ENCODE measurements at regions of chr20 and their contacts with region 1.

Region 1: DNA sequence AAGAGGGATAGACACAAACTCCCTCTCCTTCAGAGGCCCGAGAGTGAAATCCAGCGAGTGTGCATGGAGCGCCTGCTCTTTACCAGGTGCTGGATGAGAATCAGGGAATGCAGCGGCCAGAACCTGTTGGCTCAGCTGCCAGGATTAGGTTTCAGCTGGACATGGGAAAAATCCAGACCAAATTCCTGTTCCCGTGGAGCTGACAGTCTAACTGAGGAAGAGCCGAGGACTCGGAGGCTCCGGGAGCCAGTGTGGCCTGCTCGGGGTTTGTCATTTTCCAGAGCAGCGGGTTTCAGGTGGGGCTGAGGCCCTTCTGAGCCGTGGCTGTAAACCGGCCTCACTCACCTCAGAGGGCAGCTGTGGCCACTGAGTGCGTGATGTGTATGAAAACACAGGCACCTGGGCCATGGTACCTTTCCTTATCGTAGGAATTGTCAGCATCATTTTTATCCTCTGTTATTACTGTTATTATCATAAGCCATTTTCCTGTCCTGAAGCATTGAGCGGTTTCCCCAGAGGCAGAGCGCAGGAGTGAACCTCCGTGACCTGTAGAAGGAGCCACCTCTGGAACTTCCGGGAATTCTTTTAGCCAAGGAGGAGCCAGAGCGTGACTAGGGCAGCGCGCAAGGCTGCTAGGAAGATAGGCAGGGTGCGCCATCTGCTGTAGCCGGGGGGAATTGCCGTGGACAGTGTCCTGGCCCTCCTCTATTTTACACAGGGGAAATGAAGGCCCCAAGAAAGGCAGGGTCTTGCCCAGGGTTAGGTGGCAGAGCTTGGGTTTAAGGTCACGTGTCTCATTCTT is 27.3 kb downstream of the PKIG start:
- DNase-seq: peak; percentile 81 to 88
- ATAC-seq: peak; percentile 94
- H3K4me3 ChIP-seq: peak overlapping the region; percentile 35 to 44 (median 41)
- H3K27ac ChIP-seq: peak overlapping the region; percentile 88 to 93 (median 92)
- H3K4me1 ChIP-seq: peaks cover 35 to 43% of the 10 kb centered on the region in 2 donors
- H3K27me3 ChIP-seq: no peaks in the 10 kb centered on the region
- CTCF ChIP-seq: peak; percentile 96 to 99 (median 98)
- POLR2A ChIP-seq: no peak

Region 2: DNA sequence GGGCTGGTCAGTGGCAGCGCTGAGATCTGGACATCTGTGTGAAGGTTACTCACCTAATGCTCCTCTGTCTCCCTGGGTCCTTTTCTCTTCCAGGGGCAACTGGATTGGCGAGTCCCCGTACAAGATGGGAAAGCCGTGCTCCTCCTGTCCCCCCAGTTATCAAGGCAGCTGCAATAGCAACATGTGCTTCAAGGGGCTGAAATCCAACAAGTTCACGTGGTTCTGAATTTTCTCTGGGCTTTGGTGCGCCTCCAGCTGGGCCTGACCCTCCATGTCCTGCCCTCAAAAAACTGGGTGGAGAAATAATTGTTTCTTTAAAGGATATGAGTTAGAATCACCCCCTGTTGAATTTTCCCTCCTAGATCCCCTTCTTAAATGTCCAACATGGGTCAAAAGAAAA is 259.1 kb before region 1 on chr20:
- in situ Hi-C with region 1: no loop called
- intact Hi-C with region 1: no loop called
- DNase-seq: no peak
- ATAC-seq: no peak
- H3K4me3 ChIP-seq: no peak overlapping the region
- H3K27ac ChIP-seq: no peak overlapping the region
- H3K4me1 ChIP-seq: no peaks in the 10 kb centered on the region
- H3K27me3 ChIP-seq: peaks cover 0 to 2% (median 0%) of the 10 kb centered on the region in 3 donors
- CTCF ChIP-seq: no peak
- POLR2A ChIP-seq: no peak

Region 3: DNA sequence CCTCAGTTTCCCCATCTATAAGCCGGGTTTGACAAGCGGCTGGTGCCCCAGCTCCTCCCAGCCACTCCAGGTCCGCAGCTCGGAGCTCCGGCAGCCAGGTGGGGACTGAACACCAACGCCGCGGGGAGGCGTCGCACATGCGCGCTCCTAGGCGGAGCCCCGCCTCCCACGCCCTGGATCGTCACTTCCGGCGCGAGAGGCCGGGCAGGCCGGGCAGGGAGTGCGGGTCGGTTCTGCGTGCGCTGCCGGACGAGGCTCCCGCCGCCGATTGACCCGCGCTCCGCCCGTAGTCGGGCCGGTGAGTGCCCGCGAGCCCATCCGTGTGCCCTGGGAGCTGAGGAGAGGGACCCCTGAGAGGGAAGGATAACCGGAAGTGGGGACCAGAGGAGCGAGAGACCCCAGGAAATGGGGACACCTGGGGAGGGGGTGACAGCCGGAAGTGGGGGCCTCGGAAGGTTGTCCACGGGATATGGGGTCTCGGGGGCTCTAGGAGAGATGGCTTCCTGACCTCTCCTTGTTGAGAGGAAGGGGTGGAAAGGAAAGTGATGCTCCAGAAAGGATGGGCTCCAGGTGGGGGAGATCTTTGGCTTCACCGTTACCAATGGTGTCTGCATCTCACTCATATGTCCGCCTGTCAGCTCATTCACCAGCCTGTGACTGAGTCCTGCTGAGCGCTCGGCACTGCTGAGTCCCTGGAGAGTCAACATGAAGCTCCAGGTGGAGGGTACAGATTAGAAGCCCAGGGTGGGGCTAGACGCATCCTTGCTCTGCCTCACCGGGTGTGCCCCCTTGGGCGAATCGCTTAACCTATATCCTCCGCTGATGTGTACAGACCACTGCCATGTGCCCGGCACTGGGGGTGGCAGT is 133.8 kb before region 1 on chr20 and contains the start of gene TTPAL:
- in situ Hi-C with region 1: loop called in 1 of 4 experiments (anchors 10 kb)
- intact Hi-C with region 1: loop called (anchors 1 kb)
- DNase-seq: peak; percentile 77 to 88
- ATAC-seq: peak; percentile 85 to 87
- H3K4me3 ChIP-seq: peak within 1 kb of the TSS; percentile 66 to 97 (median 78)
- H3K27ac ChIP-seq: peak within 1 kb of the TSS; percentile 88 to 99 (median 92)
- H3K4me1 ChIP-seq: peaks cover 12 to 15% of the 10 kb centered on the region in 2 donors
- H3K27me3 ChIP-seq: no peaks in the 10 kb centered on the region
- CTCF ChIP-seq: peak; percentile 31 to 63 (median 52)
- POLR2A ChIP-seq: peak; percentile 96 to 98
- total RNA-seq, gene TTPAL: 3.5 to 5.0 (median 4.7) TPM

Region 4: DNA sequence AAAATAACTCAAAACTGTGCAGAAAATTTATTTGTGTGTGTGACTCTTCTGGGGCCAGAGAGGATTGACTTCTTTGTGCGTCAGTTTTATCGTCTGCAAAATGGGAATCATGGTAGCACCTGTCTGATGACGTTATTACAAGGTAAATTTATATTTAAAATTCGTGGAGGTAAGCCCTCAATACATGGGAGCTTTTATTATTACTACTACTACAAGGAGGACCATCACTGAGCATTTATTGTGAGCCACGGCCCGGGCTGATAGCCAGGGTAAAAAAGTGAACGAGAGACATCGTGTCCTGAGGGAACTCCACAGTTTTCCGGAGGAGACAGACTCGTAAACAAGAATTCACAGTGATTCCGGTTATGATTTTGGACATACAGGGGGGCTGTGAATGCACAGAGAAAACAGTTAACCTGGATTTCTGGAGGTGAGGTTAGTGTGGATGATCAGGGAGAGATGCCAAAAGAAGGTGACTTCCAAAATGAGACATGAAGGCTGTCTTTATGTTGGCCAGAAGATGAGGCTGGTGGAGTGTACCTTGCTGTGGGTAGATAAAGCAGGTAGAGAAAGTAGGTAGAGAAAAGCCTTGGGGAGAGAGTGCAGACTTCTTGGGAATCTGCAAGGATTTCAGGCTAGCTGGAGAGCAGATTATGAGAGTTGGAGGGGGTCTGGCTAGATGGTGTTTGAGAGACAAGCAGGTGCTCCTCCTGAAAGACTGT is 77.3 kb before region 1 on chr20:
- in situ Hi-C with region 1: loop called (anchors 5 kb)
- intact Hi-C with region 1: loop called (anchors 1 kb)
- DNase-seq: no peak
- ATAC-seq: peak; percentile 28 to 38
- H3K4me3 ChIP-seq: peak overlapping the region; percentile 63 to 82 (median 78)
- H3K27ac ChIP-seq: peak overlapping the region; percentile 74 to 85 (median 77)
- H3K4me1 ChIP-seq: peaks cover 9 to 15% of the 10 kb centered on the region in 2 donors
- H3K27me3 ChIP-seq: no peaks in the 10 kb centered on the region
- CTCF ChIP-seq: no peak
- POLR2A ChIP-seq: no peak

Region 5: GRCh38 chr20:44582311-44583025 is 27.2 kb before region 1 on chr20 and contains the start of gene PKIG:
- in situ Hi-C with region 1: no loop called
- intact Hi-C with region 1: loop called (anchors 2 kb)
- DNase-seq: peak; percentile 89 to 92
- ATAC-seq: peak; percentile 88
- H3K4me3 ChIP-seq: peak within 1 kb of the TSS; percentile 65 to 76 (median 74)
- H3K27ac ChIP-seq: peak within 1 kb of the TSS; percentile 95 to 98 (median 98)
- H3K4me1 ChIP-seq: peaks cover 71 to 79% of the 10 kb centered on the region in 2 donors
- H3K27me3 ChIP-seq: no peaks in the 10 kb centered on the region
- CTCF ChIP-seq: no peak
- POLR2A ChIP-seq: peak; percentile 89 to 97
- total RNA-seq, gene PKIG: 72.9 to 153 (median 100) TPM